PC-9 (cell line): ENCODE measurements at regions of chr6 and their contacts with region 1.

Region 1: DNA sequence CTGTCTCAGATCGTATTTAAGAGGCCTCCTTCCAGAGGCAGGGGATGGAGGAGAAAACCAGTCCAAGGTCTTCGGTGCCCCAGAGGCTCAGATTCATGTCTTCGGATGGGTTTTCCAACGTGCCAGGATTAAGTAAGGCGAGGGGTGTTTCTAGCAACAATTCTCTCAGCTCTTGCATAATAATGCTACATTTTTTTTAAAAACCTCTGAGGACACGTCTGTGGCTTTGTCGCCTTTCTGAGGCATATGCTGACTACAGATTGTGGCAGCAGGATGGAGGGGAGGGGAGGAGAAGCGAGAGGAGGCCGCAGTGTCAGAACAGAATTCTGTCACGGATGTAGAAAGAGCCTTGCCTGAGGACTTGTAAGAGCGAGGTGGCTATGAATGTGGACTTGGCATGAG is 17.7 kb upstream of the CCDC167 start:
- DNase-seq: no peak
- H3K4me3 ChIP-seq: no peak overlapping the region
- H3K27ac ChIP-seq: no peak overlapping the region
- H3K4me1 ChIP-seq: peaks cover 17% of the 10 kb centered on the region
- H3K27me3 ChIP-seq: 0 out of 2 replicates have a peak, but pooled peaks cover 6% of the 10 kb centered on the region
- CTCF ChIP-seq: no peak

Region 2: DNA sequence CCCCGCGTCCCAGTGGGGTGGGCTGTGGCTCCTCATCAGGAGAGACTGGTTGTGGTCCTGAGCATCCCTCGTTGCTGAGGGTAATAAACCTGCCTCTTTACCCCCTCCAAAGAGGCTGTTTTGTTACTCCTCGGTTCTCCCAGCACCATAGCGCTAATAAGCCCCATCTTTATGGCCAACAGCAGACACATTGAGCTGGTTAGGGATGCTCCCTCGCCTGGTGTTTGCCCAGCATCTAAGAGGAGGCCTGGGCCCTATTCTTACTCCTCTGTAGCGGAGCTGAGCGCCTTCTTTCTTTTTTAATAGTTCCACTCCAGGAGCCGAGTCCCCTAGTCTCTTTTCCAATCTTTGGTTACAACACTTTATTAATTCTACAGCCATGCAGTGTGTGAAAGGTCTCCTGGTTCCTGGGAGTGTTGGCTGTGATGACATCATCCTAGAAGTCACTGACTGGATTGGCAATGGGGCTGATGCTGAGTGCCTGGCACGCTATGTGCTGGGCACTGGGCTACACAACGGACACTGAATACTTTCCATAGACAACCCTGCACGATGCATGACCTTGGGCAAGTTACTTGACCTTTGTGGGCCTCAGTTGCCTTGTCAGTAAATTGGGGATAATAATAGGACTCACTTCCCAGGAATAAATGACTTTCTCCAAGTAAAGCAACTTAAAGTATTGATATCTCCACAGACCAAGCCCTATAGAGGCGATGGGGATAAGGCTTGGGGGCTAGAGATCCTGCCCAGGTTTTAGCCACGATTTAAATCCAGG is 33.0 kb after region 1 on chr6:
- CTCF ChIA-PET with region 1: no interaction called
- POLR2A ChIA-PET with region 1: interaction called, 22 read pairs
- intact Hi-C with region 1: no loop called
- DNase-seq: peak in 1 of 2 experiments; percentile 68
- H3K4me3 ChIP-seq: no peak overlapping the region
- H3K27ac ChIP-seq: no peak overlapping the region
- H3K4me1 ChIP-seq: peaks cover 53% of the 10 kb centered on the region
- H3K27me3 ChIP-seq: no peaks in the 10 kb centered on the region
- CTCF ChIP-seq: no peak